ENCODE measurements at regions of chrX and their contacts with region 1.

Region 1: DNA sequence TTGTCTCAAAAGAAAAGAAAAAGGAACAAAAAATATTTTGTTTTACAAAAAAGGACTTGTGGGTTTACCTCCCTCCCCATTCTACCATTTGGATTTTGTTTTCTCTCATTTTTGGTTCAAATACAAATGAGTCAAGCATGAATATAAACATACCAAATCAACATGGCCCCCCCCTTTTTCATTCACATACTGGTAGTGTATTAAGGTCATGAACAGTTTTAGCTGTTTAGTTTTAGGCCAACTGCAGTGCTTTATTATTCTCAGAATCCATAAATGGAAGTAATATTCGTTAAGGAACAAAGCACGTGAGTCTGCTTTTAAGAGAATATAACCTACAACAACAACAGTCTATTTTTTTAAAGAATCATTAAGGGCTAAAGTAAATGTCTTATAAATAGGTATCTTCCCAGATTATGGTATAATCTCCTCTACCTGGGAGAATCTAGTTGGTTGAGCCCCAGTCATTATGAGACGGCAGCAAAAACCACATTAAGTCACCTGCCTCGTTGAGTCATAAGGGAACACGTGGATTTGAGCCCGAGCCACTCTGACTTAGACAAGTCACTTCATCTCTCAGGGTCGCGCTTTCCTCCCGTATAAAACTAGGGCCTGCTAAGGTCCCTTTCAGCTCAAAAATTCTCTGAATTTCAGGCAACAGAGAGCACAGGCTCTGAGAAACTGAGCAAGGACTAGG is 26.7 kb downstream of the BCLAF3 start:
- DNase-seq: no peak
- ATAC-seq: no peak
- H3K4me3 ChIP-seq: no peak overlapping the region
- H3K27ac ChIP-seq: no peak overlapping the region
- H3K4me1 ChIP-seq: no peaks in the 10 kb centered on the region
- H3K27me3 ChIP-seq: no peaks in the 10 kb centered on the region
- CTCF ChIP-seq: no peak
- POLR2A ChIP-seq: no peak
- RAD21 ChIP-seq: no peak

Region 2: GRCh38 chrX:19887911-19888879 is 76.0 kb before region 1 on chrX:
- CTCF ChIA-PET with region 1: no interaction called
- POLR2A ChIA-PET with region 1: no interaction called
- dilution Hi-C with region 1: no loop called
- in situ Hi-C with region 1: no loop called
- intact Hi-C with region 1: no loop called
- DNase-seq: peak; percentile 77
- ATAC-seq: peak; percentile 60
- H3K4me3 ChIP-seq: peak overlapping the region; percentile 56
- H3K27ac ChIP-seq: peak overlapping the region; percentile 46
- H3K4me1 ChIP-seq: 0 out of 2 replicates have a peak, but pooled peaks cover 2% of the 10 kb centered on the region
- H3K27me3 ChIP-seq: no peaks in the 10 kb centered on the region
- CTCF ChIP-seq: peak; percentile 70
- POLR2A ChIP-seq: no peak
- RAD21 ChIP-seq: peak; percentile 76

Region 3: GRCh38 chrX:19931146-19931545 is 33.0 kb before region 1 on chrX:
- CTCF ChIA-PET with region 1: no interaction called
- POLR2A ChIA-PET with region 1: no interaction called
- dilution Hi-C with region 1: no loop called
- in situ Hi-C with region 1: no loop called
- intact Hi-C with region 1: loop called (anchors 1 kb)
- DNase-seq: no peak
- ATAC-seq: no peak
- H3K4me3 ChIP-seq: no peak overlapping the region
- H3K27ac ChIP-seq: no peak overlapping the region
- H3K4me1 ChIP-seq: no peaks in the 10 kb centered on the region
- H3K27me3 ChIP-seq: no peaks in the 10 kb centered on the region
- CTCF ChIP-seq: no peak
- POLR2A ChIP-seq: no peak
- RAD21 ChIP-seq: no peak

Region 4: DNA sequence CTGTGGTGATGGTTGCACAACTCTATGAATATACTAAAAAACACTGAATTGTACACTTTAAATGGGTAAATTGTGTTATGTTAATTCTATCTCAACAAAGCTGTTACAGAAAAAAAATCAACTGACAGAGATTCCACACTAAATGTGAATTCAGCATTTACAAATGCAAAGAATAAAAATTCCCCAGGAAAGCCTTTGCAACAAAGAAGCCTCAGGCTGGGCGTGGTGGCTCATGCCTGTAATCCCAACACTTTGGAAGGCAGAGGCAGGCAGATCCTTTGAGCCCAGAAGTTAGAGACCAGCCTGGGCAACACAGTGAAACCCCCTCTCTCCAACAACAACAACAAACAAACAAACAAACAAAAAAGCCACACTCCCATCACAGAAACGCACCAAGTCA is 17.8 kb after region 1 on chrX:
- CTCF ChIA-PET with region 1: no interaction called
- POLR2A ChIA-PET with region 1: no interaction called
- dilution Hi-C with region 1: no loop called
- in situ Hi-C with region 1: no loop called
- intact Hi-C with region 1: loop called (anchors 1 kb)
- DNase-seq: no peak
- ATAC-seq: no peak
- H3K4me3 ChIP-seq: no peak overlapping the region
- H3K27ac ChIP-seq: no peak overlapping the region
- H3K4me1 ChIP-seq: no peaks in the 10 kb centered on the region
- H3K27me3 ChIP-seq: no peaks in the 10 kb centered on the region
- CTCF ChIP-seq: no peak
- POLR2A ChIP-seq: no peak
- RAD21 ChIP-seq: no peak